Left cardiac atrium (tissue), 4 donors: ENCODE measurements at regions of chr19 and their contacts with region 1.

Region 1: GRCh38 chr19:29645911-29646310 is 19.4 kb upstream of the PLEKHF1 start:
- DNase-seq: peak; percentile 79
- ATAC-seq: peak; percentile 96

Region 2: GRCh38 chr19:29660835-29661234 is 14.9 kb after region 1 on chr19:
- intact Hi-C with region 1: loop called in 1 of 2 experiments (anchors 2 kb)
- DNase-seq: no peak
- ATAC-seq: no peak

Region 3: GRCh38 chr19:29745253-29745652 is 99.3 kb after region 1 on chr19:
- intact Hi-C with region 1: no loop called
- DNase-seq: no peak
- ATAC-seq: no peak